Activated CD8-positive, alpha-beta T cell treated with anti-CD3 and anti-CD28 coated beads, Interleukin-2, amount 10 ng/mL, durations not matched to agents 7 days and 5 days (primary cell): ENCODE measurements at regions of chr2 and their contacts with region 1.

Region 1: GRCh38 chr2:219530048-219530963 is 13.3 kb downstream of the CHPF start:
- DNase-seq: peak; percentile 87
- ATAC-seq: peak; percentile 95
- H3K4me3 Mint-ChIP-seq: no peak overlapping the region
- H3K27ac Mint-ChIP-seq: no peak overlapping the region
- H3K4me1 Mint-ChIP-seq: no peaks in the 10 kb centered on the region
- H3K27me3 Mint-ChIP-seq: peaks cover 51% of the 10 kb centered on the region

Region 2: DNA sequence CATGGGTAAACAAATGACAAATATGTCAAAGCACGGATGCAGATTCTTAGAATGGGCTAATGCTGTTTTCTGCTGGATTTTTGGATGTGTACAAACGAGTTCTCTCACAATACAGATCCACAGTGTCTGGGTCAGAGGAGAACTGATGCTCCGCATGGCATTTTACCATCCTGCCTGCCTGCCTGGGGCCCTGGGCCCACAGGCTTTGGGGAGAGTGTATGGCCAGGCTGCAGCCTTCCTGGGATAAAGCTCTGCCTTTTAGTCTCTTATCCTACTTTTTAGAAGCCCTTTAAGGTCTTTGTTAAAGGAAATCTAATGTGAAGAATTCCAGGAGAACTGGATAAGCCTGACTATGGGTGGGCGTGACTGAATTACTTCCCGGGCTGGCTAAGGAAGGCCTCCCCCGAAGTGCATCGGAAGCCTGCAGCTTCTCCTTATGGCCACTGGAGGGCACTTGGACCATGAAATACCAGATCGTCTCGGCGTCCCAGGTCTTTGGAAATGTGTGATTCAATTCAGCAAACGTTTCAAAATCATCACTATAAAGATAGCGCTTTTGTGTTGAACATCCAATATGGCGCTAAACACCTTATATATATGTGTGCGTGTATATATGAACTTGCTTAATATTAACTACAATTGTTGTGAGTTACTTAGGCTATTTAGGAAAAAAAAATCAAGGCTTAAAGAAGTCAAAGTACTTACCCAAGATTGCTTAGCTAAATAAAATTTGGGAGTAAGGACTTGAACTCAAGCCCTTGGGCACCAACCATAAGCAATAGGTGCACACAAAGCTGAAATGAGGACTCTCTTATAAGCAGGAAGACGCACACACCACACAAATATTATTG is 127.4 kb before region 1 on chr2:
- CTCF ChIA-PET with region 1: interaction called, 104 read pairs
- POLR2A ChIA-PET with region 1: no interaction called
- DNase-seq: peak; percentile 76
- ATAC-seq: peak; percentile 90
- H3K4me3 Mint-ChIP-seq: no peak overlapping the region
- H3K27ac Mint-ChIP-seq: no peak overlapping the region
- H3K4me1 Mint-ChIP-seq: no peaks in the 10 kb centered on the region
- H3K27me3 Mint-ChIP-seq: peaks cover 4% of the 10 kb centered on the region

Region 3: GRCh38 chr2:219459460-219460311 is 70.6 kb before region 1 on chr2:
- CTCF ChIA-PET with region 1: interaction called, 25 read pairs
- POLR2A ChIA-PET with region 1: no interaction called
- DNase-seq: peak; percentile 53
- ATAC-seq: peak; percentile 27
- H3K4me3 Mint-ChIP-seq: no peak overlapping the region
- H3K27ac Mint-ChIP-seq: peak overlapping the region; percentile 52
- H3K4me1 Mint-ChIP-seq: peaks cover 54% of the 10 kb centered on the region
- H3K27me3 Mint-ChIP-seq: no peaks in the 10 kb centered on the region

Region 4: DNA sequence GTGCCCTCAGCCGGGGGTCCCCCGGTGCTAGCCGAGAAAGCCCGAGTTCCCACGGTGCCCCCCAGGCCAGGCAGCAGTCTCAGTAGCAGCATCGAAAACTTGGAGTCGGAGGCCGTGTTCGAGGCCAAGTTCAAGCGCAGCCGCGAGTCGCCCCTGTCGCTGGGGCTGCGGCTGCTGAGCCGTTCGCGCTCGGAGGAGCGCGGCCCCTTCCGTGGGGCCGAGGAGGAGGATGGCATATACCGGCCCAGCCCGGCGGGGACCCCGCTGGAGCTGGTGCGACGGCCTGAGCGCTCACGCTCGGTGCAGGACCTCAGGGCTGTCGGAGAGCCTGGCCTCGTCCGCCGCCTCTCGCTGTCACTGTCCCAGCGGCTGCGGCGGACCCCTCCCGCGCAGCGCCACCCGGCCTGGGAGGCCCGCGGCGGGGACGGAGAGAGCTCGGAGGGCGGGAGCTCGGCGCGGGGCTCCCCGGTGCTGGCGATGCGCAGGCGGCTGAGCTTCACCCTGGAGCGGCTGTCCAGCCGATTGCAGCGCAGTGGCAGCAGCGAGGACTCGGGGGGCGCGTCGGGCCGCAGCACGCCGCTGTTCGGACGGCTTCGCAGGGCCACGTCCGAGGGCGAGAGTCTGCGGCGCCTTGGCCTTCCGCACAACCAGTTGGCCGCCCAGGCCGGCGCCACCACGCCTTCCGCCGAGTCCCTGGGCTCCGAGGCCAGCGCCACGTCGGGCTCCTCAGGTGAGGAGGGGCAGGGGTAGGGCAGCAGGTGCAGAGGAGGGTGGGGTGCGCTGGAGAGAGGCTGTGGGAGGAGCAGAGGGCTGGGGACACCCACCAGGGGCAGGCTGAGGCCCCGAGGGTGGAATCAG is 45.7 kb before region 1 on chr2:
- CTCF ChIA-PET with region 1: interaction called, 13 read pairs
- POLR2A ChIA-PET with region 1: no interaction called
- DNase-seq: no peak
- ATAC-seq: peak; percentile 34
- H3K4me3 Mint-ChIP-seq: no peak overlapping the region
- H3K27ac Mint-ChIP-seq: no peak overlapping the region
- H3K4me1 Mint-ChIP-seq: peaks cover 2% of the 10 kb centered on the region
- H3K27me3 Mint-ChIP-seq: peaks cover 41% of the 10 kb centered on the region

Region 5: GRCh38 chr2:219509780-219510511 is 20.4 kb before region 1 on chr2:
- CTCF ChIA-PET with region 1: interaction called, 22 read pairs
- POLR2A ChIA-PET with region 1: no interaction called
- DNase-seq: peak; percentile 59
- ATAC-seq: peak; percentile 75
- H3K4me3 Mint-ChIP-seq: no peak overlapping the region
- H3K27ac Mint-ChIP-seq: no peak overlapping the region
- H3K4me1 Mint-ChIP-seq: peaks cover 15% of the 10 kb centered on the region
- H3K27me3 Mint-ChIP-seq: peaks cover 48% of the 10 kb centered on the region